ENCODE measurements at regions of chr1 and their contacts with region 1.

Region 1: GRCh38 chr1:155172732-155173477 is at the start of gene KRTCAP2:
- DNase-seq: peak; percentile 94
- H3K4me3 Mint-ChIP-seq: peak within 1 kb of the TSS; percentile 96
- H3K27ac Mint-ChIP-seq: peak within 1 kb of the TSS; percentile 96
- H3K4me1 Mint-ChIP-seq: peaks cover 42% of the 10 kb centered on the region
- H3K27me3 Mint-ChIP-seq: no peaks in the 10 kb centered on the region
- total RNA-seq, gene KRTCAP2: 237 and 247 TPM in 2 replicates

Region 2: GRCh38 chr1:154936555-154937084 is 236.3 kb before region 1 on chr1 and contains the start of gene PMVK:
- intact Hi-C with region 1: loop called (anchors 1 kb)
- DNase-seq: peak; percentile 94
- H3K4me3 Mint-ChIP-seq: peak within 1 kb of the TSS; percentile 93
- H3K27ac Mint-ChIP-seq: peak within 1 kb of the TSS; percentile 95
- H3K4me1 Mint-ChIP-seq: peaks cover 45% of the 10 kb centered on the region
- H3K27me3 Mint-ChIP-seq: no peaks in the 10 kb centered on the region
- total RNA-seq, gene PMVK: 44.7 and 44.8 TPM in 2 replicates

Region 3: GRCh38 chr1:155135415-155136028 is 37.4 kb before region 1 on chr1 and contains the start of gene SLC50A1:
- intact Hi-C with region 1: loop called (anchors 2 kb)
- DNase-seq: peak; percentile 92
- H3K4me3 Mint-ChIP-seq: peak within 1 kb of the TSS; percentile 91
- H3K27ac Mint-ChIP-seq: peak within 1 kb of the TSS; percentile 97
- H3K4me1 Mint-ChIP-seq: peaks cover 32% of the 10 kb centered on the region
- H3K27me3 Mint-ChIP-seq: peaks cover 2% of the 10 kb centered on the region
- total RNA-seq, gene SLC50A1: 56.9 and 58.0 TPM in 2 replicates

Region 4: DNA sequence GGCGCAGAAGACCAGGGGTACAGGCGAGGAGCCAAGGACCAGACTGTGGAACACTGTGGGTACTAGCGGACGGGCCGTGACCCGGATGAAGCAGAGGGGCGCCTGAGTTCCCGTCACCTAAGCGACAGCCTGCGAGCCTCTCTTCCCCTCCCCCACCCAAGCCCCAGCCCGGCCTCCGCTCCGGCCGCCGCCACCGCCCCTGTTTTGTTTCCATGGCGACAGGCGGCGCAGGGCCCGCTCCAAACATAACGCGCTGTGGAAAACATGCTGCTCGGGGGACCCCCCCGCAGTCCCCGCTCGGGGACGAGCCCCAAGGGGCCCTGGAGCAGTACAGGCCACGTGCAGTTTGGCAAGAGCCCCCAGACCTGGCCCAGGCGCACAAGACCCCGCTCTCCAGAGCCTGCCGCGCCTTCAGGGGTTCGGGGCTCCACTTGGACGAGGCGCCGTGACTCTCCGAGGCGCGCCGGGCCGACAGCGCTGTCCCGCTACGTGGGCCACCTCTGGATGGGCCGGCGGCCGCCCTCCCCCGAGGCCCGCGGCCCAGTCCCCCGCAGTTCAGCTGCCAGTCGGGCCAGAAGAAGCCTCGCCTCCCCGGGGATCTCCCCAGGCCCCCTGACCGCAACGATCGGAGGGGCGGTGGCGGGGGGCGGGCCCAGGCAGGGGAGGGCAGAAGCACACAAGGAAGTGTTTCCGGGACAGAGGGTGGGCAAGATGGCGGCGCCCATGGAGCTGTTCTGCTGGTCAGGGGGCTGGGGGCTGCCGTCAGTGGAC is 35.8 kb after region 1 on chr1 and contains the start of gene MTX1:
- intact Hi-C with region 1: loop called (anchors 1 kb)
- DNase-seq: peak; percentile 84
- H3K4me3 Mint-ChIP-seq: peak within 1 kb of the TSS; percentile 92
- H3K27ac Mint-ChIP-seq: peak within 1 kb of the TSS; percentile 87
- H3K4me1 Mint-ChIP-seq: peaks cover 24% of the 10 kb centered on the region
- H3K27me3 Mint-ChIP-seq: no peaks in the 10 kb centered on the region
- total RNA-seq, gene MTX1: 58.6 and 64.0 TPM in 2 replicates

Region 5: GRCh38 chr1:155227261-155228095 is 54.6 kb after region 1 on chr1:
- intact Hi-C with region 1: loop called (anchors 1 kb)
- DNase-seq: peak; percentile 99
- H3K4me3 Mint-ChIP-seq: peak overlapping the region; percentile 95
- H3K27ac Mint-ChIP-seq: peak overlapping the region; percentile 94
- H3K4me1 Mint-ChIP-seq: peaks cover 26% of the 10 kb centered on the region
- H3K27me3 Mint-ChIP-seq: no peaks in the 10 kb centered on the region